OCI-LY7 (cell line): ENCODE measurements at regions of chr2 and their contacts with region 1.

Region 1: DNA sequence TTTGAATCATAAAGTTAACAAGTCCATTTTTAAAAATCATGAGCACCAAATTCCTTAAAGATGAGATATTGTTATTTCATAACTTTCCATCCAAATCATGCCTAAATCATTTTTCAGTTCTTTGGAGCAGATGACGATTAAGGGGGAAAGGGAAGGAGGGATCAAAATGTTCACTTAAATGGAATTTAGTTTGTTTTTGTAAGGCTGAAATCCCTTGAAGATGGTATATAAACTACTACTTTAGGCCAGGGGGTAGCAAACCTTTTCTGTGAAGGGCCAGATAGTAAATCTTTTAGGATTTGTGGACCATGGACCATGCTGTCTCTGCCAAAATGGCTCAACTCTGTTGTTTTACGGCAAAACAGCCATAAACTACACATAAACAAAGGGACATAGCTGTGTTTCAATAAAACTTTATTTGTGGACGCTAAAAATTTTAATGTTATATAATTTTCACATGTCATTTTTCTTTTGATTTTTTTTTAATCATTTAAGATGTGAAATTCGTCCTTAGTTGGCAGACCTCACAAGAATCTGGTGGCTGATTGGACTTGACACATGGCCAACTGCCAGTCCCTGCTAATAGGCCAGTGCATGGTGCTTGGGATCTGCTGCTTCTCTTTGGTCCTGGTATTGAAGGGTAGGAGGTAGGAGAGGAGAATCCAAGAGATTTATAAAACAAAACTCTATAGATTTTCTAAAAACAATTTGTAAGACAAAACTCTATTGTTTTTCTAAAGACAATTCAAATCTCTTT is 52.0 kb upstream of the RTN4 start:
- DNase-seq: no peak
- H3K4me3 ChIP-seq: no peak overlapping the region
- H3K27ac ChIP-seq: no peak overlapping the region
- H3K4me1 ChIP-seq: peaks cover 20% of the 10 kb centered on the region
- CTCF ChIP-seq: no peak

Region 2: GRCh38 chr2:55115761-55116597 is 13.7 kb after region 1 on chr2:
- CTCF ChIA-PET with region 1: no interaction called
- POLR2A ChIA-PET with region 1: interaction called, 13 read pairs
- intact Hi-C with region 1: no loop called
- DNase-seq: no peak
- H3K4me3 ChIP-seq: no peak overlapping the region
- H3K27ac ChIP-seq: no peak overlapping the region
- H3K4me1 ChIP-seq: peaks cover 26% of the 10 kb centered on the region
- CTCF ChIP-seq: no peak

Region 3: GRCh38 chr2:55153584-55154295 is 51.5 kb after region 1 on chr2:
- CTCF ChIA-PET with region 1: interaction called, 3 read pairs
- POLR2A ChIA-PET with region 1: interaction called, 3 read pairs
- intact Hi-C with region 1: loop called (anchors 2 kb)
- DNase-seq: no peak
- H3K4me3 ChIP-seq: no peak overlapping the region
- H3K27ac ChIP-seq: no peak overlapping the region
- H3K4me1 ChIP-seq: peaks cover 27% of the 10 kb centered on the region
- CTCF ChIP-seq: no peak